ENCODE measurements at regions of chr4 and their contacts with region 1.

Region 1: DNA sequence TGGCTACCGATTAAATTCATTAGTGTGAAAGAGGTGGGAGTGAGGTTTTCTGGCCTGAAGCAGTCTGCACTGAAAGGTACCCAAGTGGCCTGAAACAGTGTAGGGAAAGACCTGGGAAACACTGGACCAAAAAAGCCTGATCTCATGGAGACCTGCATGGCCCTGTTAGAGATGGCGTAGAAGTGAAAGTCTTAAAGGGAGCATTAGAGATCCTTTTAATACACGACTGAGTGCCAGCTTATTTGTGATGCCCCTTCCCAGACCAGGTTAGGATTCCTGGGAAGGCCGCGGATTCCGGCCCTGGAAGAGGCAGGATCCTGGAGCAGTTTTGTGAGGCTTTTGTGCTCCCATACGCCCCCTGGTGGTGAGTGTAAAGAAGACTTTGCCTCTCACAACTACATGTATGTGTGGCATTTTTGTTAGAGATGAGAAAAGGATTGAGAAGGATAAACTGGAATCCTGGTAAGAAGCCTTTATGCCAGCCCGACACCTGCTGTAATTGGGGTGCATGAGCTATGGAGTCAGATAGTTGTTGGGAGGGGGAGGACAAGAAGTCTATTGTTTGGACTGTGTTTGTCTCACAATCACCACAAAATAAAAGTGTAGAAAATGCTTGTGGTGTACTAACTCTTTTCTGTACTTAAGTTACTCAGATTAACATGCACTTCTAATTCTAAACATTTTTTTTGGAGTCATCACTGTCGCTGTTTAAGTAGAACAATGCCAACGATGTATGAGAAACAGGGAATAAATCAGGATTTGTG is 54.0 kb downstream of the JADE1 start:
- DNase-seq: peak; percentile 71 to 91
- H3K4me3 ChIP-seq: no peak overlapping the region
- H3K4me1 ChIP-seq: no peaks in the 10 kb centered on the region
- H3K27me3 ChIP-seq: no peaks in the 10 kb centered on the region

Region 2: DNA sequence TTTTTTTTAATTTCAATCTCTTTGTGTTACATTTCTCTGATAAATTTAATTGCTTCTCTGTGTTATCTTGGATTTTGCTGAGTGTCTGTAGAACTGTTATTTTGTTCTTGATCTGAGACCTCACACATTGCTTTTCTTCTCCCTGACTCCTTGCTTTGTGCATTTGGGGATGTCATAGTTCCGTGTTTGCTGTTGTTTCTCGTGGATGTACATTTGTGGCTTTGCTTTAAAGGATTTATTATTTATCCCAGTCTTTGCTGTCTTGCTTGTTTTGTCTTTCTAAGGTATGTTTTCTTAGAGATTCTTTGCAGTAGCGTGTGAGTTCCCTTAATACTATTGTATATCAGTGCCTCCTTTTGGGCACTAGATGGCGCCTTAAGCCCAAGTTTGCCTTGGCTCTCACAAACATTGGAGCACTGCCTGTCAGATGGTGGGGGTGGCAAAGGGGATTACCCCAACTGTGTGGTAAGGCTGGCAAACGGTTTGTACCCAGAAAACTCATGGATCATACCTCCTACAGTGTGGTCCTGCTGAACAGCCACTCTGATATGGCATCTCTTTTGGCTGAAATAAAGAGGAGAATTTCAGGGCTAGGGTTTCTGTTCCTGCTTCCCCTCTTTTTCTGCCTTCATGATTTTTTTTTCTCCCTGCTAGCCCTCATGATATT is 672.2 kb before region 1 on chr4:
- in situ Hi-C with region 1: loop called (anchors 10 kb)
- DNase-seq: peak; percentile 60 to 75
- H3K4me3 ChIP-seq: no peak overlapping the region
- H3K4me1 ChIP-seq: no peaks in the 10 kb centered on the region; the same call in 1 of the 2 replicates
- H3K27me3 ChIP-seq: no peaks in the 10 kb centered on the region

Region 3: GRCh38 chr4:128454281-128455075 is 409.0 kb before region 1 on chr4:
- in situ Hi-C with region 1: loop called (anchors 10 kb)
- DNase-seq: peak; percentile 80 to 83
- H3K4me3 ChIP-seq: no peak overlapping the region
- H3K4me1 ChIP-seq: peaks cover 18% of the 10 kb centered on the region
- H3K27me3 ChIP-seq: no peaks in the 10 kb centered on the region

Region 4: DNA sequence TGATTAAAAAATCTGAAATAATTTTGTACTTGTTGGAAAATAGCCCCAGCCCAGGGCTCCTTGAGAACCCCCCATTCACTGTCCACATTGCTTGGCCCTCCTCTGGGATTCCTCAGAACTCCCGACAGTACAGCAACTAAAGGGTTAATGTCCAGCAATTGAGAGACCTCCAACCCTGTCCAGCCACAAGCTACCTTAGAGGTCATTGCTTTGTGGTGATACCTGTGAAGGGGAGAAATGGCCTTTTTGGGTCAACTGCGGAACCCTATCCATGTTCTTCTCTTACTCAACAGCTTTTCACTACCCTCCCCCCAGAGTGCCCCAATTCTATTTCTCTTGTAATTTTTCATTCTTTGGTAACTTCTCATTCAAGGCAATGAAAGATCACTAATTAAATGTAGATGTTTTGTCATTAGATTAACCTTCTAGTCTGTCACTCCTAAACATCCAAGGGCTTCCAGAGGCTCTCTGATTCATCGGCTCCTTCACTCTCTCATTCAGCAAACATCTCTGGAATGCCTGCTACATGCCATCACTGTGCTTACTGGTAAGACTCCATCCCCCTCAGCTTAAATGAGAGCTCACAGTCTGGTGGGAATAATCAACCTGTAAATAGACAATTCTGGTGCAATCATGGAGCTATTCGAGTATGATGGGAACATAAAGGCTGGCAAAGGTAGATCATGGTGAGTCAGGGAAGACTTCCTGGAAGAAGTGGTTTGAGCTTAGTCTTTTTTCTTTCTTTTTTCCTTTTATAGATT is 334.5 kb before region 1 on chr4:
- in situ Hi-C with region 1: no loop called
- DNase-seq: no peak
- H3K4me3 ChIP-seq: no peak overlapping the region
- H3K4me1 ChIP-seq: no peaks in the 10 kb centered on the region
- H3K27me3 ChIP-seq: no peaks in the 10 kb centered on the region

Region 5: DNA sequence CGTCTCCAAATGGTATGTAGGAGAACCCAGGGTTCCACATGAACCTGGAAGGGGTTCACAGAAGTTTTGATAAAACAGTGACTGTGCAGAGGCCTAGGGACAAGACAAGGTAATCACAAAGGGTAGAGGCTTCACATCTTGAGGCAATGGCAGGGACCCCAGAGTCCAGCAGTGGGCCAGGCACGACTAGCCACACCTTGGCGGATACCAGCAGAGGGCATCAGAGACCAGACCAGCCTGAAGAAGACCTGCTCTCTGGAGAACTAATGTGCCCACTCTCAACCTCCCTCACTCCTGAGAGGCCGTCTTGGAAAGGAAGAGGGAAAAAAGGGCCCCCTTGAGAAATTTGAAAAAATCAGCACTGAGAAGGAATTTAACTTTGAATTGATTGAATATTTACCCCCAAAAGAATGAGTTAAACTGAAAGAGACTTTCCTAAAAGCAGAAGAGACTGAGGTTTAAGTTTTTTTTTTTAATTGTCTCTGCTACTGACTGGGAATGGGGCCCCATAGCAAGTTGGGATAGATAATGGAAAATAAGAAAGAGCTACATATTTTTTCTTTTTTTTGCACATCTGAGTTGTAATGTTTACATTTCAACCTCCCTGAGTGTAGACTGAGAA is 297.8 kb before region 1 on chr4:
- in situ Hi-C with region 1: loop called (anchors 5 kb)
- DNase-seq: peak; percentile 39 to 76
- H3K4me3 ChIP-seq: no peak overlapping the region
- H3K4me1 ChIP-seq: peaks cover under 1% of the 10 kb centered on the region; the same call in 1 of the 2 replicates
- H3K27me3 ChIP-seq: no peaks in the 10 kb centered on the region

Region 6: GRCh38 chr4:129179276-129179675 is 315.8 kb after region 1 on chr4:
- in situ Hi-C with region 1: no loop called
- DNase-seq: no peak
- H3K4me3 ChIP-seq: no peak overlapping the region
- H3K4me1 ChIP-seq: no peaks in the 10 kb centered on the region
- H3K27me3 ChIP-seq: no peaks in the 10 kb centered on the region